ENCODE measurements at regions of chr11 and their contacts with region 1.

Region 1: DNA sequence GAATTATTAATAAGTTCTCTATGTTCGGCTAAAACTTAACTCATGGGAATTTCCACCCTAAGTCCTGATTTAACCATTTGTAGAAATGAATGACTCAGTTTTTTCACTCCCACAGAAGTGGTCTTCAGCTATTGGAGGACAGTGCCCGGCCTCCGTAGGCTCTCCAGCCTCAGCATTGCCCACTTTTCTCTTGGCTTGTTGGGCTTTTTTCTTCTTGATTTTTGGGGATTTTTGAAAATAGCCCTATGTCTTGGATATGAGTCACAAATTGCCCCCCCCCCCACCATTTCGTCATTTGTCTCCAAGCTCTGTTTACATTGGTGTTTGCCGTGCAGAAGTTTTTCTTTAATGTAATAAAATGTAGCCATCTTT is 66.7 kb downstream of the PACS1 start:
- DNase-seq: no peak
- H3K4me3 ChIP-seq: no peak overlapping the region
- H3K27ac ChIP-seq: peak overlapping the region in 1 of 2 donors; percentile 3
- H3K4me1 ChIP-seq: peaks cover 0 to 8% of the 10 kb centered on the region in 2 donors
- H3K27me3 ChIP-seq: no peaks in the 10 kb centered on the region
- CTCF ChIP-seq: no peak

Region 2: DNA sequence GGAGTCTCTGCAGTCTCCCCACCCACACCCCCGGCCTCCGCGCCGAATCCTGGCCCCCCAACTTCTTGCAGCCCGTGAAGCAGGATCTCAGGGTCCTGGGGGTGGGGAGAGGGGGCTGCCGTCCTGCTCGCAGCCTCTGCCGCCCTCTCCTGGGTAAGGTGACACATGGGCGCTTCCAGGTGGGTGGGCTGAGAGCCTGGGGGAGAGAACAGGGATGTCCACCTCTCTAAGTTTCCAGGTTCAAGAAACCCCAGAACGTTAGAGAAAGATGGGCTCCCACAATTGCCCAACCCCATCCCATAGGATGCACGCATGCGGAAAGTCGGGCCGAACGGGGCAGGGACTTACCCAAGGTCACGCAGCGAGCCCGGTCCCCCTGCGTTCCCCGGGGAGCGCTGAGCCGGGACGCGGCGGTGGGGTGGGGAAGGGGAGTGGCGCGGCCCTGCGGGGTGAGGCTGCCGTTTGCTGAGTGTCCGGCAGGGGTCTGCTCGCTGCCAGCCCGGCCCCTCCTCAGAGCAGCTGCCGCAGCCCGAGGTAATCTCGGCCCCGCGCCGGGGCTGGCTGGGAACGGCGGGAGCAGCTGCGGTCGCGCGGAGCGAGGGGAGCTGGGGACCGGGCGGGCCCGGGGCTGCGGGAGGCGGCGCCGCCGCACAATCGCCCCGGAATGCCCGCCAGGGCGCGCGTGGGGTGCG is 955.7 kb before region 1 on chr11:
- intact Hi-C with region 1: no loop called
- DNase-seq: peak in 1 of 2 donors; percentile 75
- H3K4me3 ChIP-seq: peak overlapping the region; percentile 70 to 95
- H3K27ac ChIP-seq: peak overlapping the region; percentile 90 to 95
- H3K4me1 ChIP-seq: peaks cover 2 to 9% of the 10 kb centered on the region in 2 donors
- H3K27me3 ChIP-seq: no peaks in the 10 kb centered on the region
- CTCF ChIP-seq: peak; percentile 31 to 59 (median 48)

Region 3: DNA sequence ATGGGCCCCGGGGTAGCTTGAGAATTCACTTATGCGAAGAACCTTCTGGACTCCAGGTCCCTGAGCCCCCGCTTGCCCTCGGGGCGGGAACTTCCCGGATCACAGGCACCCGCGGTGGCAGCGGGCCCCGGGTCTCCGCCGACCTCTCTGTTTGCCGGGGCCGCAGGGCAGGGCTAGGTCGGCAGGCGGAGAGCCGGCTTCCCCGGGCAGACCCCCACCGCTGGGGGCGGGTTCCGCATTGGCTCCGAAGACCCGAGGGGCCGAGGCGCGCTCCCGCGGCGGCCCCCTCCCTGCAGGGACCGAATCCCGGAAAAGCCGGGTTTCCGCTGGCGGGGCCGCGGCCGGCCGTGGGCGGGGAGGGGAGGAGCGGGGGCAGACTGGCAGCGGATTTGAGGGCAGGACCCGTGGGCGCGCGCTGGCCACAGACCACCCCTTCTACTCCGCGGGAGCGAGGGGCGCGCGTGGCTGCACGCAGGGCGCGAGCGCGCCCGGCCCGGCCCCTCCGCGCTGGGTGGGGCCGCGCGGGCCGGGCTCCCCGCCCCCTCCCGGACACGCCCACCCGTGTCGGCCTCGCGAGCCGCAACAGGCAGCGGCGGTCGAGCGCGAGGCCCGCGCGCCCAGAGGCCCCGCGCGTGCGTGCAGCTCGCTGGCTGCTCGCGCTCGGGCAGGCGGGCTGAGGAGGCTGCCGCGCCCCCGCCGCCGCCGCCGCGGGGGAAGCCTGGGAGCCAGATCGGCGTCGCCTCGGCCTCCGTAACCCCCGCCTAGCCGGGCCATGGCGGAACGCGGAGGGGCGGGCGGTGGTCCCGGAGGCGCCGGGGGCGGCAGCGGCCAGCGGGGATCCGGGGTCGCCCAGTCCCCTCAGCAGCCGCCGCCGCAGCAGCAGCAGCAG is 66.8 kb before region 1 on chr11 and contains the start of gene PACS1:
- intact Hi-C with region 1: loop called (anchors 2 kb)
- DNase-seq: peak in 1 of 2 donors; percentile 87
- H3K4me3 ChIP-seq: peak within 1 kb of the TSS; percentile 91 to 97
- H3K27ac ChIP-seq: peak within 1 kb of the TSS; percentile 97
- H3K4me1 ChIP-seq: peaks cover 4 to 22% of the 10 kb centered on the region in 2 donors
- H3K27me3 ChIP-seq: no peaks in the 10 kb centered on the region
- CTCF ChIP-seq: peak in 1 of 3 experiments; percentile 51
- total RNA-seq, gene PACS1: 138 TPM